AG04450 (cell line): ENCODE measurements at regions of chr10 and their contacts with region 1.

Region 1: GRCh38 chr10:84429926-84430520 is 101.6 kb downstream of the CCSER2 start:
- DNase-seq: no peak
- H3K4me3 ChIP-seq: no peak overlapping the region
- H3K27ac ChIP-seq: no peak overlapping the region
- H3K27me3 ChIP-seq: no peaks in the 10 kb centered on the region
- CTCF ChIP-seq: peak; percentile 67

Region 2: GRCh38 chr10:82653244-82654155 is 1776.5 kb before region 1 on chr10:
- CTCF ChIA-PET with region 1: no interaction called
- POLR2A ChIA-PET with region 1: no interaction called
- DNase-seq: no peak
- H3K4me3 ChIP-seq: no peak overlapping the region
- H3K27ac ChIP-seq: no peak overlapping the region
- H3K27me3 ChIP-seq: no peaks in the 10 kb centered on the region
- CTCF ChIP-seq: no peak

Region 3: GRCh38 chr10:84440781-84441180 is 10.8 kb after region 1 on chr10:
- CTCF ChIA-PET with region 1: interaction called, 22 read pairs
- POLR2A ChIA-PET with region 1: no interaction called
- DNase-seq: no peak
- H3K4me3 ChIP-seq: no peak overlapping the region
- H3K27ac ChIP-seq: no peak overlapping the region
- H3K27me3 ChIP-seq: no peaks in the 10 kb centered on the region
- CTCF ChIP-seq: no peak